ENCODE measurements at regions of chr22 and their contacts with region 1.

Region 1: GRCh38 chr22:18077639-18078328 is at the start of gene PEX26:
- H3K4me3 ChIP-seq: peak within 1 kb of the TSS; percentile 96
- H3K27ac ChIP-seq: peak within 1 kb of the TSS; percentile 67
- H3K4me1 ChIP-seq: no peaks in the 10 kb centered on the region
- CTCF ChIP-seq: no peak

Region 2: DNA sequence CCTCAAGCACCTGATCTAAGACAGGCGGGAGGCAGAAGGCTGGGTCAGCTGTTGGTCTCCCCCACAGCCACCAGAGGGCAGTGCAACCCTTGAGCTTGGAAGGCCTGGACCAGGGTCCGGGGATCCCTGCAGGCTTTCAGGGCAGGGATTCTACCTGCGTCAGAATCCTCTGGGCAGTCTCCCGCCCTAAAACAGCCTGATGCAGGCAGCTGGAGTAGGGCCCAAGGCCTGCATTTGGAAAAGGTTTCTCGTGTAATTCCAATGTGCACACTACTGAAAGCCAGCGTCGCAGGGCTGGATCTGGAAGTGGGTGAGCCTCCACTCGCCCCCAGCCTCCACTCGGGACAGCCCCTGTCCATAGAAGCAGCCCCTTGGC is 335.3 kb before region 1 on chr22:
- CTCF ChIA-PET with region 1: interaction called, 74 read pairs
- POLR2A ChIA-PET with region 1: interaction called, 3 read pairs
- H3K4me3 ChIP-seq: no peak overlapping the region
- H3K27ac ChIP-seq: no peak overlapping the region
- H3K4me1 ChIP-seq: no peaks in the 10 kb centered on the region
- CTCF ChIP-seq: peak; percentile 39; the same call in 1 of the 2 replicates

Region 3: GRCh38 chr22:17862646-17863181 is 215.1 kb before region 1 on chr22:
- CTCF ChIA-PET with region 1: interaction called, 13 read pairs
- POLR2A ChIA-PET with region 1: no interaction called
- H3K4me3 ChIP-seq: no peak overlapping the region
- H3K27ac ChIP-seq: no peak overlapping the region
- H3K4me1 ChIP-seq: 0 out of 2 replicates have a peak, but pooled peaks cover under 1% of the 10 kb centered on the region
- CTCF ChIP-seq: no peak

Region 4: GRCh38 chr22:17910561-17911311 is 167.0 kb before region 1 on chr22:
- CTCF ChIA-PET with region 1: interaction called, 44 read pairs
- POLR2A ChIA-PET with region 1: no interaction called
- H3K4me3 ChIP-seq: no peak overlapping the region
- H3K27ac ChIP-seq: no peak overlapping the region
- H3K4me1 ChIP-seq: peaks cover 10% of the 10 kb centered on the region
- CTCF ChIP-seq: peak; percentile 60; the same call in 1 of the 2 replicates

Region 5: DNA sequence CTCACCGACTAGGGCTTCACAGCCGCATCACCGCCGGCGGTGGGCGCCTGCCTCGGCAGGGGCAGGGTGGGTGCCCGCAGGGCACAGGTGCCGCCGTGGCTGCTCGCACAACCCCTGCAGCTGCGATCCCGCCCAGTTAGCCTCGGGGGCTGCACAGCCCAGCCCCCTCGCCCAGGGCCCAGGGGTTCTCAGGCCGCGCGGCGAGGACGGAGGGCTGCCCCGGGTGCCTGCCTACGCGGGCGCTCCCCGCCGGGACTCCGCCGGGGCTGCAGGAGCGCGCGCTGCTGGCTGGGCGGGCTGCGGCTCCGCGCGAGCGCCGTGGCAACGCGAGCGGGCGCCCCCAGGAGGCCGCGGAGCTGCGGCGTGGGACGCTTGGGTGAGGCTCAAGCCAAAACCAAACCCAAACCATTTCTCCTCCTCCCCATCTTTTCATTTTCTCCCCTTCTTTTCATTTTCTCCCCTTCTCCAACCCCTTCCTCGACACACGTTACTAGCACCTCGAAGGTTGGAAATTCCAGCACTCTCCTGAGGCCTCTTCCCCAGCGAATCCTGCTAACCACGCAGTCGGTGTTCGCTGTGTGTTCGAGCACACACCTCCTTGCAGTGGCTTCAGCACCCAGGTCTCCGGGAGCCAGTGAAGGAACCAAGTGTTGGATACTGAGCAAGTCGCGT is 53.4 kb before region 1 on chr22 and contains the start of gene MICAL3:
- CTCF ChIA-PET with region 1: interaction called, 48 read pairs
- POLR2A ChIA-PET with region 1: interaction called, 11 read pairs
- H3K4me3 ChIP-seq: peak within 1 kb of the TSS; percentile 60
- H3K27ac ChIP-seq: peak within 1 kb of the TSS; percentile 47; the same call in 1 of the 2 replicates
- H3K4me1 ChIP-seq: peaks cover 5% of the 10 kb centered on the region
- CTCF ChIP-seq: peak; percentile 49; the same call in 1 of the 2 replicates

Region 6: GRCh38 chr22:18088825-18089568 is 11.2 kb after region 1 on chr22:
- CTCF ChIA-PET with region 1: interaction called, 19 read pairs
- POLR2A ChIA-PET with region 1: interaction called, 5 read pairs
- H3K4me3 ChIP-seq: no peak overlapping the region
- H3K27ac ChIP-seq: no peak overlapping the region
- H3K4me1 ChIP-seq: no peaks in the 10 kb centered on the region
- CTCF ChIP-seq: no peak

Region 7: GRCh38 chr22:18118345-18118915 is 40.6 kb after region 1 on chr22:
- CTCF ChIA-PET with region 1: no interaction called
- POLR2A ChIA-PET with region 1: no interaction called
- H3K4me3 ChIP-seq: no peak overlapping the region
- H3K27ac ChIP-seq: no peak overlapping the region
- H3K4me1 ChIP-seq: no peaks in the 10 kb centered on the region
- CTCF ChIP-seq: no peak

Measured in HEK293 (cell line).